Esophagus muscularis mucosa (tissue), 4 donors: ENCODE measurements at regions of chr16 and their contacts with region 1.

Region 1: GRCh38 chr16:72467157-72467759 is 295.3 kb upstream of the PMFBP1 start:
- DNase-seq: no peak
- H3K4me3 ChIP-seq: no peak overlapping the region
- H3K27ac ChIP-seq: no peak overlapping the region
- H3K4me1 ChIP-seq: no peaks in the 10 kb centered on the region
- H3K27me3 ChIP-seq: no peaks in the 10 kb centered on the region
- CTCF ChIP-seq: peak; percentile 32 to 47 (median 34)
- EP300 ChIP-seq: no peak
- POLR2A ChIP-seq: no peak

Region 2: GRCh38 chr16:72131036-72131435 is 336.2 kb before region 1 on chr16:
- intact Hi-C with region 1: loop called (anchors 10 kb)
- DNase-seq: peak; percentile 84
- H3K4me3 ChIP-seq: no peak overlapping the region
- H3K27ac ChIP-seq: no peak overlapping the region
- H3K4me1 ChIP-seq: no peaks in the 10 kb centered on the region
- H3K27me3 ChIP-seq: no peaks in the 10 kb centered on the region
- CTCF ChIP-seq: no peak
- EP300 ChIP-seq: no peak
- POLR2A ChIP-seq: no peak

Region 3: DNA sequence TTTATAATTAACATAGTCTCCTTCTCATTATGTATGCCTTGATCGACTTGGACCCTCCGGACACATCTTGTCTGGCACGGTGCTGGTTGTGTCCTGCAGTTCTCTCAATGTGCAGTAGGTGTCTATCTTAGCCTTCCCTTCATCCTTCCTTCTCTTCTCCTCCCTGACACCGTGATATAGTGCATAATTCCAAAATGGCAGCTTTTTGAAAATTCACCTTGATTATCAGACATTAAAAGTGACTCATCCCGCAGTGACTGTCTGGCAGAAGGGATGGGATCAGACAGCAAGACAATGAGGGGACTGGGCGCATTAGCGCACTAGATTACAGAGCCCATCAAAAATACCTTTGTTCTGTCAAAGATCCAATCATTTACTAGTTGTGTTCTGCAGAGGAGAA is 225.3 kb before region 1 on chr16:
- intact Hi-C with region 1: loop called (anchors 2 kb)
- DNase-seq: no peak
- H3K4me3 ChIP-seq: no peak overlapping the region
- H3K27ac ChIP-seq: no peak overlapping the region
- H3K4me1 ChIP-seq: peaks cover 0 to 6% (median 0%) of the 10 kb centered on the region in 4 donors
- H3K27me3 ChIP-seq: no peaks in the 10 kb centered on the region
- CTCF ChIP-seq: peak; percentile 56 to 68 (median 57)
- EP300 ChIP-seq: no peak
- POLR2A ChIP-seq: no peak